ENCODE measurements at regions of chr2 and their contacts with region 1.

Region 1: GRCh38 chr2:240434728-240435456 is 571 bp upstream of the GPC1 start:
- DNase-seq: peak; percentile 53 to 95
- H3K4me3 ChIP-seq: peak overlapping the region; percentile 98
- H3K27ac ChIP-seq: peak overlapping the region; percentile 92 to 98
- H3K4me1 ChIP-seq: peaks cover 23 to 28% of the 10 kb centered on the region in 2 donors
- H3K27me3 ChIP-seq: no peaks in the 10 kb centered on the region
- CTCF ChIP-seq: no peak

Region 2: DNA sequence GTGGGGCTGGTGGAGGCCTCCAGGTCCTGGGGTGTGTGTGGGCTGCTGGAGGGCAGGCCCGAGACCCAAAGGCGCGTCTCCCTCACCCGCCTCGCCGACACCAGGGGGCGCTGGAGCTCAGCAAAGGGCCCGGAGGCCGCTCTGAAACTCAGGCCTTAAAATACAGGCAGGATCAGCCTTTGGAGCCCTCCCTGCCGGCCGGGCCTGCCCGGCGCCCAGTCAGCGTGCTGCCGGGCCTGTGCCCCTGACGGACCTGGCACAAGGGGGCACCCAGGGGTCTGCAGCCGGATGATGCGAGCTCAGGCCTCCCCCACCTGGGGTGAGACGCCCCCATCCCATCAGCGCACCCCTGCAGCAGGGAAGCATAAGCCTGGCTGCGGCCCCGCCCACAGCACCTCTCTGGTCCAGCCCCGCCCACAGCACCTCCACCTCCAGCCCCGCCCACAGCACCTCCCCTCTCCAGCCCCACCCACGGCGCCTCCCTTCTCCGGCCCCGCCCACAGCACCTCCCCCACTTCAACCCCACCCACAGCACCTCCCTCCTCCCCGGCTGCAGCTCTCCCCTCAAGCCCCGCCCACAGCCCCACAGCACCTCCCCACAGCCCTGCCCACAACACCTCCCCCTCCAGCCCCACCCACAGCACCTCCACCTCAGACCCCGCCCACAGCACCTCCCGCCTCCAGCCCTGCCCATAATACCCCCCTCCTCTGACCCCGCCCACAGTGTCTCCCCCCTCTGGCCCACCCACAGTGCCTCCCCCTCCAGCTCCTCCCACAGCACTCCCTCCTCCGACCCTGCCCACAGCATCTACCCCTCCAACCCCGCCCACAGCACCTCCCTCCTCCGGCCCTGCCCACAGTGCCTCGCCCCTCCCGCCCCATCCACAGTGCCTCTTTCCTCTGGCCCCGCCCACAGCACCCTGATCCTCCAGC is 201.7 kb before region 1 on chr2:
- intact Hi-C with region 1: loop called (anchors 1 kb)
- DNase-seq: peak in 1 of 2 donors; percentile 90
- H3K4me3 ChIP-seq: peak overlapping the region; percentile 34 to 61
- H3K27ac ChIP-seq: peak overlapping the region; percentile 53 to 76
- H3K4me1 ChIP-seq: peaks cover 6 to 22% of the 10 kb centered on the region in 2 donors
- H3K27me3 ChIP-seq: no peaks in the 10 kb centered on the region
- CTCF ChIP-seq: peak; percentile 91 to 97 (median 92)

Region 3: DNA sequence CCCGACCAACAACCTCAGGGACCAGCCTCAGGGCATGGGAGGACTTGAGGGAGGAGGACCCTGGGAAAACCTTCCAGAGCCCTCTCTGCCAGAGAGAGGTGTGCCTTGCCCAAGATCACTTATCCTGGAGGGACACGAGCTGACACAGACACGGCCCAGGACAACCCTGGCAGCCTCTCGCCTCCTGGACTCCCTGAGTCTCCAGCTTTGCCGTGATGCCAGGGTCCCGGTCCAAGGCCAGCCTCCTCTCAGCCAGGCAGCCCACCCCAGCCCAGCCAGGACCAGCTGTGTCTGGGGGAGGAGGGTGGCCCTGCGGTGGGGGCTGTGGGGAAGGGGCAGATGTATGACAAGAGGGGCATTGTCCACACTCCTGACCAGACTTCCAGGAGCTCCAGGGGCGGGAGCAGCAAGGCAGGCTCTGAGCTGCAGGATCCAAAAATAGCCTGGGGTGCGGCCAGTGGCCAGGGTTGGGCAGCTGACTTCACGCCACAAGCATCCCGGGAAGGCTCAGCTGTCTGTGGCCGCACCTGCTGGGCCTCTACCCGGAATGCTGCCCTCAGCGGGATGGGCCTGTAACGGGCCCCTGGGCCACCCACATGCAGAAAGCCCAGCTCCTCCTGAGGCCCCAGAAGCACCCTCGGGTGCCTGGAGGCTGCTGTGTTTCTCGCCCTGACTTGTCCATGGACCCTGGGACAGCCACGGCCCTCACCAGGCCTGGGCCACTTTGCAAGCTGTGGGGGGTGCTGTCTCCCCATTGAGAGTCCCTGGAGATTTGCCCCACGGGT is 64.9 kb before region 1 on chr2:
- intact Hi-C with region 1: loop called (anchors 1 kb)
- DNase-seq: peak; percentile 24 to 92
- H3K4me3 ChIP-seq: peak overlapping the region in 1 of 2 donors; percentile 14
- H3K27ac ChIP-seq: peak overlapping the region; percentile 90 to 92
- H3K4me1 ChIP-seq: peaks cover 8 to 48% of the 10 kb centered on the region in 2 donors
- H3K27me3 ChIP-seq: no peaks in the 10 kb centered on the region
- CTCF ChIP-seq: no peak

Region 4: GRCh38 chr2:240452457-240453256 is 17.8 kb after region 1 on chr2:
- intact Hi-C with region 1: loop called (anchors 1 kb)
- DNase-seq: no peak
- H3K4me3 ChIP-seq: peak overlapping the region; percentile 67 to 90
- H3K27ac ChIP-seq: no peak overlapping the region
- H3K4me1 ChIP-seq: peaks cover 10 to 25% of the 10 kb centered on the region in 2 donors
- H3K27me3 ChIP-seq: no peaks in the 10 kb centered on the region
- CTCF ChIP-seq: no peak

Measured in ascending aorta (tissue), 2 donors.